ENCODE measurements at regions of chr17 and their contacts with region 1.

Region 1: GRCh38 chr17:38868817-38869525 is 887 bp upstream of the LASP1 start:
- DNase-seq: peak; percentile 91
- ATAC-seq: peak; percentile 76

Region 2: GRCh38 chr17:38512473-38513058 is 356.4 kb before region 1 on chr17:
- intact Hi-C with region 1: no loop called
- DNase-seq: no peak
- ATAC-seq: no peak

Region 3: GRCh38 chr17:38667099-38667786 is 201.7 kb before region 1 on chr17:
- intact Hi-C with region 1: no loop called
- DNase-seq: peak; percentile 75
- ATAC-seq: peak; percentile 68

Region 4: GRCh38 chr17:38752119-38752929 is 116.6 kb before region 1 on chr17 and contains the start of gene PSMB3:
- intact Hi-C with region 1: loop called (anchors 5 kb)
- DNase-seq: peak; percentile 97
- ATAC-seq: peak; percentile 86
- total RNA-seq, gene PSMB3: 175 TPM

Region 5: GRCh38 chr17:38853292-38854219 is 15.4 kb before region 1 on chr17 and contains the start of gene RPL23:
- intact Hi-C with region 1: loop called (anchors 1 kb)
- DNase-seq: peak; percentile 96
- ATAC-seq: peak; percentile 97
- total RNA-seq, gene RPL23: 897 TPM

Region 6: GRCh38 chr17:38886562-38887010 is 17.6 kb after region 1 on chr17:
- intact Hi-C with region 1: no loop called
- DNase-seq: no peak
- ATAC-seq: no peak

Region 7: DNA sequence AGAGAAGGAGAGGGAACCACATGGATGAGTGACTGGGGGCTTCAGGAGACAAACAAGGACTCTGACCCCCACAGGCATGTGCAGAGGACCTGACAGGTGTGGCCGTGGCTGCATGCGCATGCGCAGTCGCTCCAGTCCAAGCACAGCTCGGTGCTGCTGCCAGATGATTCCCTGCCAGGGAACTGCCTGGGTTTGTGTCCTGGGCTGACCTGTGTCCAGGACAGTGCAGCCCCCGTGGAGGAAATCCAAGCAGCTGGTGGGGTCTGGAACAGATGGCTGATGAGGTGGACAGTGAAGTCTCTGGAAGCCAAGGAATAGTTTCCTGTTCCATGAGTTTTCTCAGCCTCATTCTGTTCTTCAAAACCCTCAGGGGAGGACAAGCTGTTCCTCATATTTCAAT is 28.2 kb after region 1 on chr17:
- intact Hi-C with region 1: loop called (anchors 2 kb)
- DNase-seq: peak; percentile 90
- ATAC-seq: peak; percentile 82

Region 8: DNA sequence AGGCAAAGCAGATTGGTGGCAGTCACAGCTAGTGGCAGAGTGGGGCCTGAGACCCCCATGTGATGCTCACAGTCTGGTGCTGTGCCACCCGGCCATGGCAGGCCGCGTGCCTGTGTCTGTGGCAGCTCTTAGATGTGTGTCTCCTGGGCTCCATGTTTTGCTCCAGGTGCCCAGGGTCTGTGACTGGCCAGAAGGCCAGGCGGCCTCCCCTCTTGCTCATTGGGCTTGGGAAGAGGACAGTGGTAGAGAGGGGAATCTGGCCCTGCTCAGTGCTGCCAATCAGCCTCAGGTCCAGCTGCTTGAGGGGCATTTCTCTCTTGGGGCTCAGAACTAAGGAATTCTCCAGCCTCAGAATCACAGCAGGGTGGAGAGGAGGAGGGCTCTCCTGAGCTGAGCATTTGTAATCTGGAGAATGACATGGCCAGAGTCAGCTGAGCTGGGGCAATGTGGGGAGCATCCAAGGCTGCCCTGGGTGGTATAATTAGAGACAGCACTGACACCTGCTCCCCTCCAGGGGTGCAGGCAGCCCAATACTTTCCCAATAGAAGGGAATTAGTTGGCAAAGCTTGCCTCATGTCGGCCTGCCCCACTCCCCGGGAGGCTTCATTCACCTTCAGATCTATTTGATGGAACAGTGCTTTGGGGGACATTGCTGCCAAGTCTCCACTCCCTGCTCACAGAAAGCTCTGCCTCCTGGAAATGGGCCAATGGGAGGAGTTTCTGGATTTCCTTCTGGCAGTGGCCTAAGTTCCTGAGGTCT is 53.7 kb after region 1 on chr17:
- intact Hi-C with region 1: loop called (anchors 5 kb)
- DNase-seq: no peak
- ATAC-seq: peak; percentile 60

Region 9: DNA sequence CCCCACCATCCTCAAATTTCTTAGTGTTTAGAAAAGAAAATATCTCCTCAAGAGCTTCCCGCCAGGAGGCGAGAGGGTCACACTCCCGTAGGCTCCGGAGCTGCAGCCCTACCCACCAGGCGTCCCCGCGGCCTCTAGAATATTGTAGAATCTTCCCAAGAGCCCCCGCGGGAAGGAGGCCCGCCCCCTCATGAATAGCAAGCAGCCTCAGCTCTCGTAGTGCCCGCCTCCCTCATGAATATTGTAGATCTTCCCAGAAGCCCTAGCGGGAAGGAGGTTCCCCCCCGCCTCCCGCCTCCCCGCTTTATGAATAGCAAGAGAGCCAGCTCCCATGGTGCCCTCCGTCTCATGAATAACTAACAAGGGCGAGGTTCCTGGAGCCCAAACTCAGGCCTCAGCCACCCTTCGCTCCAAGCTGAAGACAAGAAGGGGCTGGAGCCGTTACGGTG is 98.3 kb after region 1 on chr17 and contains the start of gene FBXO47:
- intact Hi-C with region 1: loop called (anchors 5 kb)
- DNase-seq: peak; percentile 98
- ATAC-seq: peak; percentile 99
- total RNA-seq, gene FBXO47: not detected

Region 10: DNA sequence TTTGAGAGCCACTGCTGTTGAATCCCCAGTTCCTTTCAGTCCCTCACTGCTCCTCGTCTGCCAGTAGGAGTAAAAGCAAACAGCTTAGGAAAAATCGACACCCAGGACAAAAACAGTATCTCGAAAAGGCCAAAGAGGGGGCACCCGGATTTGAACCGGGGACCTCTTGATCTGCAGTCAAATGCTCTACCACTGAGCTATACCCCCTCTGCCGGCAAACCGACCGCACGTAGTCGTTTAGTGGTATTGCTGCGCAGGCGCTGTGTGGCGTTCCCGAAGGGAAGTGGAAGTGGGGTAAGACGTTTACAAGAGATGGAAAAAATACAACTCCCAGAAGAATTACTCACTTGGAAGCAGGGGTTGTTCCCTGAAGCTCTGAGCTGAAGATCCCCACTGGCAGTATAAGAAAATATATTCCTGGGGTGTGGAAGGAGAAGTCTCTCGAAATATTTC is 284.7 kb after region 1 on chr17:
- intact Hi-C with region 1: loop called (anchors 2 kb)
- DNase-seq: peak; percentile 92
- ATAC-seq: peak; percentile 80